ENCODE measurements at regions of chr1 and their contacts with region 1.

Region 1: DNA sequence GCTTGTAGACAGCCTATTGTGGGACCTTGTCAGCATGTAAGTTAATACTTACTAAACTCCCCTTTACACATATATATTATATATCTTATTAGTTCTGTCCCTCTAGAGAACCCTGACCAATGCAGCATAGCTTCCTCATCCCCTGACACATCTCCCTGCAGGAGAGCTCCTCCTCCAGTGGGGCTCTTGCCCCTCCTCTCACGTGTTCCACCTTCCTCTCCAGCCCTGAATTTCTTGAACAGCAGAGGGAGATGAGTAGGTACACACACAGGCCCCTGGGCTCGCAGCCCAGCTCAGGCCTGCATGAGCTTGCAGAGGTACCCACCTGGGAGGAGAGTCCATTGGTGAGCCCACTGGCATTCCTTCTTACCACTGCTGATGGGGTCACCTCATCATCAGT is 27.3 kb upstream of the GOLT1A start:
- DNase-seq: no peak
- ATAC-seq: no peak
- H3K4me3 ChIP-seq: no peak overlapping the region
- H3K27ac ChIP-seq: no peak overlapping the region
- H3K4me1 ChIP-seq: no peaks in the 10 kb centered on the region
- H3K27me3 ChIP-seq: no peaks in the 10 kb centered on the region
- CTCF ChIP-seq: no peak

Region 2: GRCh38 chr1:204188982-204189646 is 51.9 kb before region 1 on chr1:
- intact Hi-C with region 1: loop called in 1 of 10 experiments (anchors 10 kb)
- DNase-seq: no peak
- ATAC-seq: no peak
- H3K4me3 ChIP-seq: no peak overlapping the region
- H3K27ac ChIP-seq: no peak overlapping the region
- H3K4me1 ChIP-seq: peaks cover 0 to 12% (median 0%) of the 10 kb centered on the region in 9 donors
- H3K27me3 ChIP-seq: peaks cover 0 to 85% (median 57%) of the 10 kb centered on the region in 7 donors
- CTCF ChIP-seq: no peak

Region 3: DNA sequence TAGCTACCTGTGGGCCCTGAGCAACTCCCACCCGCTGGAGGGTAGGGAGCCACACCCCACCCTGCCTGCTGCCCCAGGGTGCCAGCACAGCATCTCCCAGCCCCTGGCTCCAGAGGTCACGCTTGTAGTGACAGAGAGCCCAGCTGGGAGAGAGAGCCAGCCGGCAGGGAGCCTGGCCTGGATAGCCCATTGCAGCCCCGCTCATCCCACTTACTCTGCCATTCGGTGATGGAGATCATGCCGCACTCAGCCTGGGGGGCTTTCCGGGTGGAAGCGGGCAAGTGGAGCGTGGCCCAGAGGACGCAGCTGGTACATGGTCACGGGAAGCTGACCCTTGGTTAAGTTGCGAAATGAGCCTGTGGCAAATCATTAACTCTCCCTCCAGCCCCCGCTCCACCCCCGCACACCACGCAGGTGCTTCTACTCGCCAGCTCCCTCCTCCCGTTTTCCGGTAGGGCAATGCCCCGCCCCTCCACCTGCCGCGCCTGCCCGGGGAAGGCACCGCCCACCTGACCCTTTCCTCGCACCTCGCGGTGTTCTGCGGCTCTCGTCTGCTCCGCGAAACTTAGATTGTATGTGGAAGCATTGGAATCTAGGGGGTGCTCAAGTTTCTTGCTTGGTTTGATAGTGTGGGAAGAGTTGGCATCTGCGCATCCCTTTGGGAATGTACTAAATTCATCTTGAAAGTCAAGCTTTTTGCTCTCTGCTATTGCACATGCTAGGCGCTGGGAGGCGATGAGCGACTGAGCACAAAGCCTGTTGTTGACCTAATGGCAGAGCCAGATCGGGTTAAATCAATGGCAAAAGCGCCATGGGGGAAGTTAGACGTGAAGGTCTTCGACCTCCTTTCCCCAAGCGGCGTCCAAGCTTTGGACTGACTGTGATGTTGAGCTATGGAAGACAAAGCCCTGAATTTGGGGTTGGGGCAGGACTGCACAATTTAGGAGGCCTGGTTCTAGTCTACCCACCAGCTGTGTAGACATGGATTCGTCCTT is 27.1 kb before region 1 on chr1 and contains the start of gene GOLT1A:
- intact Hi-C with region 1: no loop called
- DNase-seq: peak; percentile 57 to 58
- ATAC-seq: peak; percentile 51 to 83 (median 79)
- H3K4me3 ChIP-seq: peak within 1 kb of the TSS in 8 of 10 donors; percentile 14 to 40 (median 27)
- H3K27ac ChIP-seq: no peak within 1 kb of the TSS
- H3K4me1 ChIP-seq: peaks cover 0 to 13% (median 7%) of the 10 kb centered on the region in 9 donors
- H3K27me3 ChIP-seq: peaks cover 0 to 11% (median 0%) of the 10 kb centered on the region in 7 donors
- CTCF ChIP-seq: peak; percentile 49 to 80 (median 72)
- total RNA-seq, gene GOLT1A: not detected

Region 4: DNA sequence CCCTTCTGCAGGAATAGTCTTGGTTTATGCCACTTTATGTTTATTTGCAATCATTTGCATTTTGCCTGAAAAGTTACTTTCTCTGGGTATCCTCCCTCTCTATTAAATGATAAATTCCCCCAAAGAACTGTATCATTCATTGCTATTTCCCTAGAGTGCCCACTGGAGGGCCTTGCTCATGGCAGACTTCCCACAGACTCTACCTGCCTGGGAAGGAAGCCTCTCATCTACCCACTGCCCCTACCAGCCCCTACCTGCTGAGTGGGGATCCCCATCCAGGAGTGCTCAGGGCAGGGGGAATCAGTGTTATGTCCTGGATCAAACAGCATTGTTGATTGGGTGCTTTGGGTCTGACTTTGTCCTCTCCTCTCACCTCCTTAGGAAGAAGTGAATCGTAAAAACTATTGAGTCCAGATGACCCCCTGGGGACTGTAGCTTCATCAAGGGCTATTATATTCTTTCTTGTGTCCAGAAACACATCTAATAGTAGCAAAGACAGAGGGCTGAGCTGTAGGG is 451.3 kb after region 1 on chr1:
- intact Hi-C with region 1: no loop called
- DNase-seq: no peak
- ATAC-seq: no peak
- H3K4me3 ChIP-seq: no peak overlapping the region
- H3K27ac ChIP-seq: no peak overlapping the region
- H3K4me1 ChIP-seq: no peaks in the 10 kb centered on the region
- H3K27me3 ChIP-seq: peaks cover 0 to 37% (median 12%) of the 10 kb centered on the region in 7 donors
- CTCF ChIP-seq: no peak